WTC11 (cell line): ENCODE measurements at regions of chr16 and their contacts with region 1.

Region 1: GRCh38 chr16:55465077-55465896 is 13.7 kb upstream of the MMP2 start:
- DNase-seq: peak; percentile 94
- ATAC-seq: peak; percentile 88
- H3K4me3 Mint-ChIP-seq: no peak overlapping the region
- H3K27ac Mint-ChIP-seq: no peak overlapping the region
- H3K4me1 Mint-ChIP-seq: peaks cover 7% of the 10 kb centered on the region
- H3K27me3 Mint-ChIP-seq: peaks cover 24% of the 10 kb centered on the region
- CTCF ChIP-seq: peak; percentile 99

Region 2: DNA sequence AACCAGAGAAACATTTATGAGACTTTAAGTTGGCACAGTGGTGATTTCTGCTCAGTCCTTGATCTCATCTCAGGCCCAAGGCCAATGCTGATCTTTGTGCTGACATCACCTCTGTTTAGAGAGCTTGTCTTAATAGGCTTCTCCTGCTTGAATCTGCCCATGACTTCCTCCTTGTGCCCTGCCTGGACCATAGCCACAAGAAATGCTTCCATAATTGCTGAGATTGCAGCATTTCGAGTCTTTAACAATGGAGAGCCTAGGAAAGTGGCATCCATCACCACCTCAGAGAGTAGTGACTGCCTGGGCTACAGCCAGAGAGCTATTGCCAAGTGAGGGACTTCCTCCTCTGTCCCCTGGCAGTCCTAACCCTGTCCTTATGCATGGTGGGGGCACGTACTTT is 11.4 kb before region 1 on chr16:
- CTCF ChIA-PET with region 1: interaction called, 18 read pairs
- POLR2A ChIA-PET with region 1: no interaction called
- DNase-seq: no peak
- ATAC-seq: no peak
- H3K4me3 Mint-ChIP-seq: no peak overlapping the region
- H3K27ac Mint-ChIP-seq: no peak overlapping the region
- H3K4me1 Mint-ChIP-seq: peaks cover 4% of the 10 kb centered on the region; the same call in 1 of the 2 replicates
- H3K27me3 Mint-ChIP-seq: no peaks in the 10 kb centered on the region
- CTCF ChIP-seq: no peak

Region 3: DNA sequence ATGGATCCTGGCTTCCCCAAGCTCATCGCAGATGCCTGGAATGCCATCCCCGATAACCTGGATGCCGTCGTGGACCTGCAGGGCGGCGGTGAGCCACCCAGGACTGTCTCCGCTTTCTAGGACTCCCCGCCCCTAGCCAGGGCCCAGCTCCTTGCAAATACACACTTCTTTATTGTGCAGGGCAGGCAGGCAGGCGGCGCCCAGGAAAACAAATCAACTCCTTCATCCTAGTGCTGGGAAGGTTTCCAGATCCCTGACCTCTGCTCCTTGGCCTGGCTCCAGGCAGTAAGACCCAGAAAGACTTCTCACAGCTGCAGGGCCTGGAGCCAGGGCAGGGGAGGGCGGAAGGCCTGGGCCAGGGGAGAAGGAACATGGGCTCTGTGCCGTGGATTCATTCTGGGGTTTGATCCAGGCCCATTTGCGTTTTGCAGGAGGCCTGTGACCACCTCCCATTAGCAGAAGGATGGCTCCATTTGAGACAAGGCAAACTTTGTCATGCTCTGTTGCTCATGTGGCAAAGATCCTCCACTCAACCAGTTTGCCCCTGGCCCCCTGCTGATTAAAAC is 37.6 kb after region 1 on chr16:
- CTCF ChIA-PET with region 1: interaction called, 62 read pairs
- POLR2A ChIA-PET with region 1: no interaction called
- DNase-seq: no peak
- ATAC-seq: peak; percentile 69
- H3K4me3 Mint-ChIP-seq: no peak overlapping the region
- H3K27ac Mint-ChIP-seq: no peak overlapping the region
- H3K4me1 Mint-ChIP-seq: peaks cover 8% of the 10 kb centered on the region
- H3K27me3 Mint-ChIP-seq: no peaks in the 10 kb centered on the region
- CTCF ChIP-seq: no peak

Region 4: GRCh38 chr16:55534756-55535155 is 69.5 kb after region 1 on chr16:
- CTCF ChIA-PET with region 1: interaction called, 19 read pairs
- POLR2A ChIA-PET with region 1: no interaction called
- DNase-seq: no peak
- ATAC-seq: no peak
- H3K4me3 Mint-ChIP-seq: no peak overlapping the region
- H3K27ac Mint-ChIP-seq: no peak overlapping the region
- H3K4me1 Mint-ChIP-seq: 0 out of 2 replicates have a peak, but pooled peaks cover 4% of the 10 kb centered on the region
- H3K27me3 Mint-ChIP-seq: no peaks in the 10 kb centered on the region
- CTCF ChIP-seq: no peak

Region 5: DNA sequence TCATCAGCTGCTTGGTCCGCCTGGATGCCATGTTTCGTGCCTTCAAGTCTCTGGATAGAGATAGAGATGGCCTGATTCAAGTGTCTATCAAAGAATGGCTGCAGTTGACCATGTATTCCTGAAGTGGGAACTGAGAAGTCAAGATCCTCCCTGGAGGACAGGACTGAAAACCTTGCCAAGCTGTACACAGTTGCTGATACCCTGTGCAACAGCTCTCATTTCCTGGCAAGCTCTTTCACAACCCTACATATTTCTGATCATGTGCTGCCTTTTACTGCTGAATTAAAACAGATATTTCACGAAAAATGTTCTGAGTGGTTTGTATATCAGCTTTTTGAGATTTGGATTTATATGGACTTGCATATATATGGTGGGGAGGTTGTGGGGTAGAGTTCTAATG is 102.1 kb after region 1 on chr16:
- CTCF ChIA-PET with region 1: interaction called, 10 read pairs
- POLR2A ChIA-PET with region 1: no interaction called
- DNase-seq: no peak
- ATAC-seq: no peak
- H3K4me3 Mint-ChIP-seq: no peak overlapping the region
- H3K27ac Mint-ChIP-seq: no peak overlapping the region
- H3K4me1 Mint-ChIP-seq: 0 out of 2 replicates have a peak, but pooled peaks cover 3% of the 10 kb centered on the region
- H3K27me3 Mint-ChIP-seq: no peaks in the 10 kb centered on the region
- CTCF ChIP-seq: no peak

Region 6: GRCh38 chr16:55661941-55662643 is 196.8 kb after region 1 on chr16:
- CTCF ChIA-PET with region 1: interaction called, 25 read pairs
- POLR2A ChIA-PET with region 1: no interaction called
- DNase-seq: no peak
- ATAC-seq: no peak
- H3K4me3 Mint-ChIP-seq: no peak overlapping the region
- H3K27ac Mint-ChIP-seq: no peak overlapping the region
- H3K4me1 Mint-ChIP-seq: peaks cover 3% of the 10 kb centered on the region; the same call in 1 of the 2 replicates
- H3K27me3 Mint-ChIP-seq: peaks cover 34% of the 10 kb centered on the region
- CTCF ChIP-seq: no peak

Region 7: DNA sequence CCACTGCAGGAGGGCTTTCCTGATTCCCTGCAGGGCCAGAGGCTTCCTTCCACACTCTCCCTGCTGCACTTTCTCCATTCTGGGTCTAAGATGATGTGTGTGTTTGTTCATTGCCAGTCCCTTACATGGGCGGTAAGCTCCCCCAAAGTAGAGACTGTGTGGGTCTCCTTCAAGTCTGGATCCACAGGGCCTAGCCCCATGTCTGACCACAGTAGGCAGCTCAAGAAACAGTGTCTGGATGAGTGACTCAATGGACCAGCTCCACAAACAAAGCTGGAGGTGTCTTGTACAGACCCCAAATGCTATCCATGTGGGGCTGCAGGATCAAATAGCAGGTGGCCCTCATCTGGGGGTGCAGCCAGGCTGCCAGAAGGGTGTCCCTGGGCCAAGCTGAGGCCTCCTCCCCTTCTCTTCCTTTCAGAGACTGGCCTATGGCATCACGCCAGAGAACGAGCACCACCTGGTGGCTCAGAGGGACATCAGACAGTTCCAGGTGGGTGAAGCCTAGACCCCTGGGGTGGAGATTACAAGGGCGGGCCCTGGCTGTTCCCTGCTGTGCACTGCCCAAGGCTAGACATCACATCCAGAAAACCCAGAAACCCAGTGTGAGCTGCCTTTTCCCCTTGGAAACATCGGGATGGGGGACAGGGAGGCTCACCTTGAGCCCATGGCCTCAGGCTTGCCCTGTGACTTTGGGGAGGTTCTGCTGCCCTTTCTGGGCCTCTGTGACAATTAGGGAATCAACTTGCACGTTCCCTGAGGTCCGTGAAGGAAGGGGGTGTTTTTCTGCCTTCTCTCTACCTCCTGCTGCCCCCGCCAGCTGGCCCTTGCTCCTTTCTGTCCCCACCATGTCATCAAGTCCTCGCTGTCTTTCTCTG is 236.4 kb after region 1 on chr16:
- CTCF ChIA-PET with region 1: interaction called, 213 read pairs
- POLR2A ChIA-PET with region 1: no interaction called
- DNase-seq: peak; percentile 71
- ATAC-seq: peak; percentile 83
- H3K4me3 Mint-ChIP-seq: no peak overlapping the region
- H3K27ac Mint-ChIP-seq: no peak overlapping the region
- H3K4me1 Mint-ChIP-seq: peaks cover 32% of the 10 kb centered on the region
- H3K27me3 Mint-ChIP-seq: no peaks in the 10 kb centered on the region
- CTCF ChIP-seq: peak; percentile 70